PC-3 (cell line): ENCODE measurements at regions of chr5 and their contacts with region 1.

Region 1: GRCh38 chr5:132293066-132293991 is 865 bp upstream of the SLC22A4 start:
- DNase-seq: peak; percentile 69
- ATAC-seq: peak; percentile 49
- H3K4me3 ChIP-seq: peak overlapping the region; percentile 97
- H3K27ac ChIP-seq: peak overlapping the region; percentile 94
- H3K4me1 ChIP-seq: peaks cover 18% of the 10 kb centered on the region
- H3K27me3 ChIP-seq: no peaks in the 10 kb centered on the region
- CTCF ChIP-seq: peak; percentile 31; the same call in 1 of the 2 replicates

Region 2: GRCh38 chr5:132103332-132103951 is 189.9 kb before region 1 on chr5:
- CTCF ChIA-PET with region 1: no interaction called
- POLR2A ChIA-PET with region 1: interaction called, 38 read pairs
- intact Hi-C with region 1: no loop called
- DNase-seq: peak; percentile 94
- ATAC-seq: peak; percentile 69
- H3K4me3 ChIP-seq: no peak overlapping the region
- H3K27ac ChIP-seq: peak overlapping the region; percentile 96
- H3K4me1 ChIP-seq: peaks cover 45% of the 10 kb centered on the region
- H3K27me3 ChIP-seq: no peaks in the 10 kb centered on the region
- CTCF ChIP-seq: no peak

Region 3: DNA sequence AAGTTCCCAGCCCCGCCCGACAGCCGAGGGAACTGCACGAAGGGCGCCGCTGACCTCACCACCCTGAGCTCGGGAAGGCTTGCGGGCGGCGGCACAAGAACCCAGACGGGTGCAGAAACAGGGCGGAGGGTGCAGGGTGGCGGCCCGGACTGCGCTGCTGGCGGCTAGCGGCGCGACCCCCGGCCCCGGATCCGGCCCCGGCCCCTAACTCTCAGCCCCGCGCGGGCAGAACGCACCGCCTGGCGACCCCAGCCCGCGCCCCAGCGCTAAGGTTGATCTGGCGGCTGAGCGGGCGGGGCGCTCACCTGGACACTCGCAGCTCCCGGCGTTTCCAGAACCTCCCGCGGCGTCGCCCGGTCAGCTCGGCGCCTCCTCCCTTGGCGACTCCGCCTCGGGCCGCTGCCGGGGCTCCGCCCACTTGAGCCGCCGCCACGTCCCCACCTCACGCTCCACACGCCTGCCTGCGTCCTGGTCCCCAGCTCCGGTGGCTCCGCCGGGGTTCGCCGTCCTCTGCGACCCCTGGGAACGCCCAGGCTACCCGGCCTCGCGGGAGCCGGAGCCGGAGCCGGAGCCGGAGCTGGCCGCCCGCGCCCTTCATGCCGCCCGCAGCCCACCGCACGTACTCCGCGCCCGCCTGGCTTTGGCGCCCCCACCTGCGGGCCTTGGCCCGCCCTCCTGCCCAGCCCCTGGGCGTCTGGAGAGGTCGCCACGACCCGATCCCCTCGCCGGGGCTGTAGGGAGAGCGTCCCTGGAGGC is 65.7 kb before region 1 on chr5 and contains the start of gene P4HA2:
- CTCF ChIA-PET with region 1: no interaction called
- POLR2A ChIA-PET with region 1: no interaction called
- intact Hi-C with region 1: loop called (anchors 5 kb)
- DNase-seq: peak; percentile 79
- ATAC-seq: peak; percentile 92
- H3K4me3 ChIP-seq: peak within 1 kb of the TSS; percentile 69
- H3K27ac ChIP-seq: peak within 1 kb of the TSS; percentile 30
- H3K4me1 ChIP-seq: peaks cover 20% of the 10 kb centered on the region
- H3K27me3 ChIP-seq: no peaks in the 10 kb centered on the region
- CTCF ChIP-seq: 0 out of 2 replicates have a peak, but pooled peaks have one; percentile 16
- total RNA-seq, gene P4HA2: 38.7 and 43.6 TPM in 2 replicates

Region 4: GRCh38 chr5:132265336-132266030 is 27.8 kb before region 1 on chr5:
- CTCF ChIA-PET with region 1: interaction called, 7 read pairs
- POLR2A ChIA-PET with region 1: no interaction called
- intact Hi-C with region 1: loop called (anchors 2 kb)
- DNase-seq: peak; percentile 92
- ATAC-seq: peak; percentile 78
- H3K4me3 ChIP-seq: peak overlapping the region; percentile 15; the same call in 1 of the 2 replicates
- H3K27ac ChIP-seq: peak overlapping the region; percentile 84
- H3K4me1 ChIP-seq: peaks cover 49% of the 10 kb centered on the region
- H3K27me3 ChIP-seq: no peaks in the 10 kb centered on the region
- CTCF ChIP-seq: peak; percentile 25; the same call in 1 of the 2 replicates

Region 5: GRCh38 chr5:132369474-132370180 is 76.3 kb after region 1 on chr5 and contains the start of gene SLC22A5:
- CTCF ChIA-PET with region 1: no interaction called
- POLR2A ChIA-PET with region 1: interaction called, 4 read pairs
- intact Hi-C with region 1: loop called (anchors 2 kb)
- DNase-seq: peak; percentile 76
- ATAC-seq: peak; percentile 85
- H3K4me3 ChIP-seq: peak within 1 kb of the TSS; percentile 97
- H3K27ac ChIP-seq: peak within 1 kb of the TSS; percentile 51
- H3K4me1 ChIP-seq: peaks cover 42% of the 10 kb centered on the region
- H3K27me3 ChIP-seq: no peaks in the 10 kb centered on the region
- CTCF ChIP-seq: no peak
- total RNA-seq, gene SLC22A5: 8.2 and 21.8 TPM in 2 replicates

Region 6: DNA sequence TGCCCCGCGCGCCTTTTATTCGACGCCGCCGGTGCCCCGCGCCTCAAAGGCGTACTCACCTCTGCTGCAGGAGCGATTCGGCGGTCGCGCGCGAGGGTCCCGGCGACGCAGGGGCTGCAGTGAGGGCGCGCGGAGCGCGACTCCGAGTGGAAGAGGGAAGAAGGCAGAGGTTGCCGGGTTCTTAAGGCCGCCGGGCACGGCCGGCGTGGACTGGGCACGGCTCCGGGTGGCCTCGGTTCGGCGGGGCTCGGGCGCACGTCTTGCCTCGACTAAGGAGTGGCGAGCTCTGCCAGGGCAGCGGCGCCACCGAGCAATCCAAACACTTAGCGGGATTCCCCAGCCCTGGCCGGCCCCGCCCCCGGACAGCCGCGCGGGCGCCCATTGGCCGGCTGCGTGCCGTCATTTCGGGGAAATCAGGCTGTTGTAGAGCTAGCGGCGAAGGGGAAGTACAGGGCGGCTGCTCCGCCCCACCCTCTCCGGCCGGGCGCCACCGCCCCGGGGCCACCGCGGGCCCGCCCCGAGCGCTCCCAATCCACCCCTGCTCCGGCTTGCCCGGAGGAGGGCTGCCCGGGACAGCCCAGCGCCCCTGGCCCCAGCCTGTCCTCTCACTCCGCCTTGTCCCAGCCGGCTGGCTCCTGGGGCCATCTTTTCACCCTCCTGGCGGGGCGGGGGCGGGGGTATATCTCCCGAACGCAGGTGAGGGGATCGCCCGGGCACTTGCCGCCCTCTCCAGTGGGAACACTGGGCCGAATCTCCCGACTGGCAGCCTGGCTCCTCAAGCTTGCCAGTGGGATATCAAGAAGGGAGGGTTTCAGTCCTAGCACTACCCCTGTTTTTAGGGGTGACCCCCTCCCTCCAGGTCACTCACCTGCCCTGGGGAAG is 197.4 kb after region 1 on chr5 and contains the start of gene IRF1:
- CTCF ChIA-PET with region 1: interaction called, 3 read pairs
- POLR2A ChIA-PET with region 1: no interaction called
- intact Hi-C with region 1: loop called (anchors 10 kb)
- DNase-seq: peak; percentile 92
- ATAC-seq: peak; percentile 83
- H3K4me3 ChIP-seq: peak within 1 kb of the TSS; percentile 97
- H3K27ac ChIP-seq: peak within 1 kb of the TSS; percentile 55
- H3K4me1 ChIP-seq: peaks cover 37% of the 10 kb centered on the region
- H3K27me3 ChIP-seq: no peaks in the 10 kb centered on the region
- CTCF ChIP-seq: no peak
- total RNA-seq, gene IRF1: 21.1 and 23.1 TPM in 2 replicates

Region 7: DNA sequence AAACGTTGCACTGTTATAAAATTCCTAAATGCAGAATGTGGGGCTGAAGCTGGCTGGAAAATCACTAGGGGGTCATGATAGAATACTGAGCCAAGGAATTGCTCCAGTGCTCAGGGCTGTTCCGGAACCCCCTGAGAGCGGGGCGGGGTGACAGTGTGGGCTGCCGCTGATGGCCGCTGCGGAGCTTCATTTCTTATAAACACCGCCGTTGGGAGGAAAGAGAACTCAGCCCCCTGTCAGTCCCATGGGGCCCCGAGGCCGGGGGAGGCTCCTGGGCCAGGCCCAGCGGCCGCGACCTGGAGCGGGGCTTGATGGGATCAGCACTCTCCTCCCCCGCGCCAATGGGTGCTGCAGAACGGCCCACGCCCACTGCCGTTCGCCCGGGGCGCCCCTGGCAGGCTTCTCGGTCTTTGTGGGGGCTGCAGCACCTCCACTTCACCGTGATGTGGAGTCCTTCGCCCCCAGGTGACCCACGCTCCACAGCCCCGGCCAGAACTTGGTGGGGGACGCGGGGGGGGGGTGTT is 202.4 kb after region 1 on chr5:
- CTCF ChIA-PET with region 1: interaction called, 3 read pairs
- POLR2A ChIA-PET with region 1: interaction called, 19 read pairs
- intact Hi-C with region 1: loop called (anchors 10 kb)
- DNase-seq: peak; percentile 72
- ATAC-seq: peak; percentile 39
- H3K4me3 ChIP-seq: peak overlapping the region; percentile 85
- H3K27ac ChIP-seq: peak overlapping the region; percentile 84
- H3K4me1 ChIP-seq: peaks cover 51% of the 10 kb centered on the region
- H3K27me3 ChIP-seq: no peaks in the 10 kb centered on the region
- CTCF ChIP-seq: no peak